BJ (cell line): ENCODE measurements at regions of chr19 and their contacts with region 1.

Region 1: GRCh38 chr19:28633319-28634018 is 579.5 kb downstream of the UQCRFS1 start:
- DNase-seq: peak; percentile 3
- H3K4me3 ChIP-seq: no peak overlapping the region
- H3K27me3 ChIP-seq: no peaks in the 10 kb centered on the region
- CTCF ChIP-seq: peak; percentile 93

Region 2: GRCh38 chr19:27966390-27966816 is 667.1 kb before region 1 on chr19:
- CTCF ChIA-PET with region 1: no interaction called
- POLR2A ChIA-PET with region 1: no interaction called
- DNase-seq: no peak
- H3K4me3 ChIP-seq: no peak overlapping the region
- H3K27me3 ChIP-seq: no peaks in the 10 kb centered on the region
- CTCF ChIP-seq: peak; percentile 72

Region 3: GRCh38 chr19:28386066-28386465 is 247.4 kb before region 1 on chr19:
- CTCF ChIA-PET with region 1: no interaction called
- POLR2A ChIA-PET with region 1: no interaction called
- DNase-seq: no peak
- H3K4me3 ChIP-seq: no peak overlapping the region
- H3K27me3 ChIP-seq: no peaks in the 10 kb centered on the region
- CTCF ChIP-seq: no peak

Region 4: DNA sequence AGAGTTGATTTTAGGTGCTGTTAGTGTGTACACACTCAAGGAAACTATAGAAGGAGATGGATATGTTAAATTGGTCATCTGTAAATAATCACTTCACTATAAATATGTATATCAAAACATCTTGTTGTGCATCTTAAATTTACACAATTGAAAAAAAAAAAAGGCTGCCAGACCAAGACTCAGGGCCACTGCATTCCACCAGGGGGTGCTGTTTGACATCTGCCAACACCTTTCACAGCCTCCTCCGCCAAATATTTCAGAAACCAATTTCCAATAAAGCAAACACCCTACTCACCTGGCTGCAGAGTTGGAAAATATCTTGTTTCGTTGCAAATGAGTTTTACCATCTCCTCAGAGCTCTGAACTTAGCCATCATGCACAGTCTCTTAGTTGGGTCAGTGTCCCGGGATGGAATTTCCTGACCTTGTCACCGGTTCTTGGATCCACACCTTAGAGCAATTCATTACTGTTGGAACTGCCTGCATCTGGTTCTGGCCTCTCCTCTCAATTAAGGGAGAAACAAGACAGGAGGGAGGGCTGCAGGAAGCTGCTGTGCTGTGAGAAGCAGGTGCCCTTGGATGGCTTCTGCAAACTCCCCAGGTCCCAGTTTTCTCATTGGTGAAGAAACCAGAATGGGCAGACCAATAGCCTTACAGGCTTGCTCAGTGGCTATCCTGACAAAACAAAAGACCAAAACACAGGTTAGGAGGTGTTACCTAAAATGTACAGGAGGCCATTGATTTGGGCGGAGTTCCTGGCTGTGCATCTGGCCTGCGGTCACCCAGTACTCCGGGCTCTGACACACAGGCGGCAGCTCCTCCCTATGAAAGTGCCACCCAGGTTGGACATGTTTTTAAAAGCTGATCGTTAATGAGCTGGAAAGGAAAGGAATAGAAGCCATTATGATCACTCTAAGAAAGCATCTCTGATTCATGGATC is 167.1 kb before region 1 on chr19:
- CTCF ChIA-PET with region 1: interaction called, 17 read pairs
- POLR2A ChIA-PET with region 1: interaction called, 3 read pairs
- DNase-seq: no peak
- H3K4me3 ChIP-seq: no peak overlapping the region
- H3K27me3 ChIP-seq: no peaks in the 10 kb centered on the region; the same call in 1 of the 2 replicates
- CTCF ChIP-seq: peak; percentile 79

Region 5: DNA sequence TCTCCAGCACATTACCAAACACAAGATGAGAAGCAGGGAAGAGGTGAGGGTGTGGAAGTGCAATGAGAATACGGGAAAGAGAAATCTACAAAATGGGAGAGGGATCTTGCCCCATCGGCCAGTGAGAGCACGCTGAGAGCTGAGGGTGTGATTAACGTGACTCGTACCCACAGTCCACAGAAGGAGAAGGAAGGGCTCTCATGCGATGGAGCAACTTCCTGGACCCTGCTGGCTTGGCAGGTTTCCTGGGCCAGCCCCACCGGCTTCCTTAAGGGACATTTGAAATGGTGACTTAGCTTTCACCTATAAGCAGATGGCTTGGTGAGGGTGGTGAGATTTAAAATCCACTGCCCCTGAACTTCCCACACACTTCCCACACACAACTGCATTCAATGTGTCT is 160.6 kb before region 1 on chr19:
- CTCF ChIA-PET with region 1: interaction called, 17 read pairs
- POLR2A ChIA-PET with region 1: no interaction called
- DNase-seq: no peak
- H3K4me3 ChIP-seq: no peak overlapping the region
- H3K27me3 ChIP-seq: no peaks in the 10 kb centered on the region
- CTCF ChIP-seq: no peak

Region 6: GRCh38 chr19:28530406-28531035 is 102.9 kb before region 1 on chr19:
- CTCF ChIA-PET with region 1: no interaction called
- POLR2A ChIA-PET with region 1: no interaction called
- DNase-seq: no peak
- H3K4me3 ChIP-seq: no peak overlapping the region
- H3K27me3 ChIP-seq: no peaks in the 10 kb centered on the region
- CTCF ChIP-seq: no peak

Region 7: DNA sequence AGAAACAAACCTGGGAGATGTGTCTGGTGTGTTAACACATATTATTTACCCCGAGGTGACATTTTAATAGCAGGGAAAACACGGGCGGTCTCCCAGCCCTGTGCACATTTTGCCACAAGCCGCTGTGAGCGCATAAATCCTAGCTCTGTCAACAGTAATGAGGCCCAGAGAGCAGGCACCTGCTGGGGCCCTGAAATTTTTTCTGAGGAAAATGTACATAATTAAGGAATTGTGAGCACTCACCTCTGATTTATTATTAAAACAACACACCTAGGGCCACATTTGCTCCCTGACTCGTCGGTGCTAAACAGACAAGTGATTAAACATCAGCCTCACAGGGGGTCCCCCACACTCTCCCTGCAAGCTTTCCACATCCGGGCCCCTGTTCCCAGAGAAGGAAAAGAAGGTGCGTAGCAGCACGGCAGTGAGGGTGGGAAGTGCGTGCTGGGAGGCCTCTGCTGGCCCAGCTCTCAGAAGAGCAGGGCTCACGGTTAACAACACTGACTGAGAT is 36.9 kb before region 1 on chr19:
- CTCF ChIA-PET with region 1: no interaction called
- POLR2A ChIA-PET with region 1: no interaction called
- DNase-seq: no peak
- H3K4me3 ChIP-seq: no peak overlapping the region
- H3K27me3 ChIP-seq: 0 out of 2 replicates have a peak, but pooled peaks cover under 1% of the 10 kb centered on the region
- CTCF ChIP-seq: no peak

Region 8: DNA sequence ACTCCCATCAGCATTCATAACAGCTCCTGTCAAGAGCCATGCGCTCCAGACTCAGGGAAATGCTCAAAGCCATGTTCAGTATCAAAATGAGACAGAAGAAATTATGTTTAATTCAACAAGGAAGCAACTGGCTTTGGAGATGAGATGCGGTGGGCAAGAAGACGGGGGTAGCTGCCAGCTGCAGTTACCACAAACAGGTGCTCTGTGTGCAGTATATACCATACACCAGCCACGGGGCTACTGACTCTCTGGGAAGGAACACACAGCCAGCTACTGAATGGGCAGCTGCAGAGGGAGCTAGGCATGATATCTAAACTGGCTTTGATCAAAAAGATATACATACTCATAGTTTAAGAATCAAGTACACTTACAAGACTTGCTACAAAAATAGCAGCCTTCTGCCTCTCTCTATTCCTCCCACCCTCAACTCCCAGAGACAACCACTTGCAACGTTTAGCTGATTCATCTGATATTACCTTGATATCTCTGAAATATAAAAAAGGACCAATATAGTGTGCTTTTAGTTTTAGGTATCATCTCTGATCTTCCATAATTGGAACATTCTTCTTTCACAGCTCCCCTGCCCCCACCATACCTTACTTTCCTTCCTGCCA is 13.5 kb before region 1 on chr19:
- CTCF ChIA-PET with region 1: interaction called, 18 read pairs
- POLR2A ChIA-PET with region 1: no interaction called
- DNase-seq: no peak
- H3K4me3 ChIP-seq: no peak overlapping the region
- H3K27me3 ChIP-seq: no peaks in the 10 kb centered on the region
- CTCF ChIP-seq: no peak